ENCODE measurements at regions of chr12 and their contacts with region 1.

Region 1: DNA sequence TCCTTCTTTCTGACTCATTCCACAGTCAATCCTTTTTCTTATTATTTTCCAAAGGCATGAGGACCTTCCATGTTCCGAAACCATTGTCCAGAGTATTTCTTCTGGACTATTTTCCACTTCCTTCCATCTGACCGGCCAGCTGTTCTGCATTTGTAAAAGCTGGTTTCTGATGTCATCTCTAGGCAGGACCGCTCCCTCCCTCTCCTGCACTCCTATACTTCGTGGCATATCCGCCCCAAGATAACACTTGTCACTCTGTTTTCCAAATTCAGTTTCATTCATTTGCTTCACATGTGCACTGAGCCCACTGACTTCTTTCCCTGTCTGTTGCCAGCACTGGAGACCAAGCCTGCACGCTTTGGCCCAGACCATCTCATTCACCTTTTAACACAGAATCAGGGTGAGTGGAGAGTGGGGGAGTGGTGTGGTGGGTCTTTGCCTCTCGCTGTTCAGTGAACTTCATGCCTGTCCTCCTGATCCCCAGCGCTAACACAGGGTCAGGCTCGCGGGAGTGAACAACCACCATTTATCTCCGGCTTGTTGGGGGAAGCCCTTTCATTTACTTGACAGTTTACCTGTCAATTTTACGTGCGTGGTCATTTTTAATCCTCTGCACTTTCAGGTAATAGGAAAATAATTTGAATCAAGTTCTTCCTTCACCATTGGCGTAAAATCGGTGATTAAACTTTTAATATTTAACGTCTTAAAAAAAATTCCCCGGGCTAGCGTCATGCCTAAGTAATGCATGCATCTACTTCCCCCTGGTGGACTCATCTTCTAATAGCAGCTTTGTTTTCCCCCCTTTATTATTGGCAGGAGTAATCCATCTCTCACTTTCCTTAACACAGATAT is 52.5 kb downstream of the C12orf75 start:
- DNase-seq: no peak
- H3K4me3 ChIP-seq: peak overlapping the region in 4 of 8 donors; percentile 1 to 24 (median 10)
- H3K27ac ChIP-seq: no peak overlapping the region
- H3K4me1 ChIP-seq: peaks cover 0 to 9% (median 5%) of the 10 kb centered on the region in 6 donors
- H3K27me3 ChIP-seq: no peaks in the 10 kb centered on the region
- CTCF ChIP-seq: peak; percentile 56 to 85 (median 77)
- POLR2A ChIP-seq: no peak

Region 2: DNA sequence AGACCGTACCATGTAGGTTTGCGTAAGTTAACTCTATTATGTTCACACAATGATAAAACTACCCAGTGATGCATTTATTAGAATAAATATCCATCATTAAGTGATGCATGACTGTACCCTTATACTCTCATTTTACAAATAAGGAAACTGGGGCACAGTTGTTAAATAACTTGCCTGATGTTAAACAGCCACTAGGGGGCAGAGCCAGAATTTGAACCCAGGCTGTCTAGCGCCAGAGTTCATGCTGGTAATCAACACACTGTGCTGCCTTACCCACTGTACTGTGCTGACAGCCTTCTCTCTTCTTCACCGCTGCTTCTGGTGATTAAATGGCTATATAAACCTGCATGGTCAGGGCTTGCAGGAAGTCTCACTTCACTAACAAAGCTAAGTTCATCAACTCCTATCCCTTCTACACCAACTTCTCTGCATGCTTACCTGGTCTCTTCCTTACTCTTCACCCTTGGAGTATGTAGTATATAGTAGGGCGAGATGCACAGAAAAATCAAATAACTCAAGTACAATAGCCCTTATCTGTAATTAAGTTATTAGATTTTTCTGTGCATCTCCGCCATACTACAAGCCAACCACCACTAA is 103.4 kb before region 1 on chr12:
- intact Hi-C with region 1: loop called (anchors 2 kb)
- DNase-seq: no peak
- H3K4me3 ChIP-seq: no peak overlapping the region
- H3K27ac ChIP-seq: no peak overlapping the region
- H3K4me1 ChIP-seq: no peaks in the 10 kb centered on the region
- H3K27me3 ChIP-seq: peaks cover 0 to 5% (median 0%) of the 10 kb centered on the region in 7 donors
- CTCF ChIP-seq: peak; percentile 7 to 69 (median 56)
- POLR2A ChIP-seq: no peak

Region 3: GRCh38 chr12:105474672-105475071 is 91.7 kb after region 1 on chr12:
- intact Hi-C with region 1: no loop called
- DNase-seq: no peak
- H3K4me3 ChIP-seq: no peak overlapping the region
- H3K27ac ChIP-seq: no peak overlapping the region
- H3K4me1 ChIP-seq: no peaks in the 10 kb centered on the region
- H3K27me3 ChIP-seq: peaks cover 0 to 12% (median 0%) of the 10 kb centered on the region in 7 donors
- CTCF ChIP-seq: no peak
- POLR2A ChIP-seq: no peak

Measured in spleen (tissue), 13 donors.